ENCODE measurements at regions of chr20 and their contacts with region 1.

Region 1: DNA sequence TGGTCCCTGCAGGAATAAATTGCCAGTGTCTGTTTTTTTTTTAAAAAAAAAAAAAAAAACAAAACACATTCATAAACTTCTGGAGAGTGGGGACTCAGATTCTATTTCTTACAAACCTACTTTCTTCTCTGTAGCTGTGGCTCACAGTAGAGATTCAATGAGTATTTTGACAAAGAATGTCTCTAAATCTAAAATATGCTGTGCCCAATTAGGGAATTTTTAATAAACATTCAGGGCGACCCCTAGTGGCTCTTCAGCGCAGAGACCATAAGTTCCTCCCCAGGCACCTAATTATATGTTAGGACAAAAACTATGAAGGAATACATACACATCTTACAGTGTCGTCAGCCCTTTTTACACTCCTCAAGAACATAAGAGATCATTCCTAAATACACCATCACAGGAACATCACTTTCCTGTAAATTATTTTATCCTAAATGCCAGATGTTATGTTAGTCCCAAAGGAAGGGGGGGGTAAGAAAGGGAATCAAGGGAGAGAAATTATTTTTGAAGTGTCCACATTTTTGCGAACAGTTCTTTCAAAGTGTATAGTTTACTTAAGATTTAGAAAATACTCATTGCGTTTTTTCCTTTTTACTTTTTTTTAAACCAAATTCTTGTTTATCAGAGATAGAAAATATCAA is 21.8 kb upstream of the NAA20 start:
- DNase-seq: peak; percentile 63
- ATAC-seq: peak; percentile 55; the same call in 2 of the 3 replicates
- H3K4me3 ChIP-seq: no peak overlapping the region
- H3K27ac ChIP-seq: no peak overlapping the region
- H3K4me1 ChIP-seq: peaks cover 38% of the 10 kb centered on the region
- H3K27me3 ChIP-seq: no peaks in the 10 kb centered on the region
- CTCF ChIP-seq: peak; percentile 85
- EP300 ChIP-seq: no peak
- POLR2A ChIP-seq: no peak
- RAD21 ChIP-seq: peak; percentile 78

Region 2: GRCh38 chr20:19784511-19785172 is 210.7 kb before region 1 on chr20:
- CTCF ChIA-PET with region 1: interaction called, 23 read pairs
- POLR2A ChIA-PET with region 1: no interaction called
- in situ Hi-C with region 1: loop called (anchors 5 kb)
- intact Hi-C with region 1: loop called (anchors 1 kb)
- DNase-seq: peak; percentile 75
- ATAC-seq: peak; percentile 91
- H3K4me3 ChIP-seq: 0 out of 6 replicates have a peak overlapping the region, but pooled peaks of 1 of the 3 experiments have one; percentile 2
- H3K27ac ChIP-seq: no peak overlapping the region
- H3K4me1 ChIP-seq: peaks cover 14% of the 10 kb centered on the region
- H3K27me3 ChIP-seq: no peaks in the 10 kb centered on the region
- CTCF ChIP-seq: peak; percentile 88
- EP300 ChIP-seq: no peak
- POLR2A ChIP-seq: no peak
- RAD21 ChIP-seq: peak; percentile 72

Region 3: DNA sequence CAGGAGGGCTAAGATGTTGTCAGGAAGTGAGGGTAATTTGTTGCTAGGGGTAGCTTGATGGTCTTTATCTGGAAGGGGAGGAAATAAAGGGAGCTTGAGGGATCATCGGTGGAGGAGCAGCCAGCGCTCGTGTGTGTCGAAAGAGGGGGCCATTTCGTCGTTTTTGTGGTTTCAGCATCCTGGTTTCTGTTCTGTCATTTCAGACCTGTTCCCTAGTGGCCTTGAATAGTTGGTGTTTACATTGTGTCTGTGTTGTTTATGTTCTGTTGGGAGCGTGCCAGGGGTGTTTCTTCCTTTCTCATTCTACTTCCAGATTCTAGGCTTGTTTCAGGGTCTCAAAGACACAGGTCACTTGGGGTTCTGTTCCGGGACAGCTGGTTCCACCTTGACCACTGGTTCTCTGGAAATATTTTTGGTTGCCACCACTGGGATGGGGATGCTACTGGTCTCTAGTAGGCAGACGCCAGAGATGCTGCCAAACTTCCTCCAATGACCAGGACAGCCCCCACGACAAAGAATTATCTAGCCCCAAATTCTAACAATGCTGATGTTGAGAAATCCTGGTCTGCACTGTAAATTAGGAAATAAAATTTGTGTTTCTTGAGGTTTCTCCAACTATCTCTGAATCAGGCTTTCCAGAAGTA is 92.1 kb before region 1 on chr20:
- CTCF ChIA-PET with region 1: interaction called, 22 read pairs
- POLR2A ChIA-PET with region 1: no interaction called
- in situ Hi-C with region 1: loop called (anchors 5 kb)
- intact Hi-C with region 1: loop called (anchors 1 kb)
- DNase-seq: peak; percentile 86
- ATAC-seq: peak; percentile 86
- H3K4me3 ChIP-seq: no peak overlapping the region
- H3K27ac ChIP-seq: no peak overlapping the region
- H3K4me1 ChIP-seq: peaks cover 17% of the 10 kb centered on the region
- H3K27me3 ChIP-seq: no peaks in the 10 kb centered on the region
- CTCF ChIP-seq: peak; percentile 95
- EP300 ChIP-seq: peak in 1 of 2 experiments; percentile 64; a peak in 1 of 4 replicates
- POLR2A ChIP-seq: no peak
- RAD21 ChIP-seq: peak; percentile 80

Region 4: GRCh38 chr20:19915111-19915798 is 80.1 kb before region 1 on chr20:
- CTCF ChIA-PET with region 1: no interaction called
- POLR2A ChIA-PET with region 1: no interaction called
- in situ Hi-C with region 1: no loop called
- intact Hi-C with region 1: loop called (anchors 5 kb)
- DNase-seq: no peak
- ATAC-seq: no peak
- H3K4me3 ChIP-seq: no peak overlapping the region
- H3K27ac ChIP-seq: no peak overlapping the region
- H3K4me1 ChIP-seq: peaks cover 35% of the 10 kb centered on the region
- H3K27me3 ChIP-seq: peaks cover 0 to 16% of the 10 kb centered on the region in 2 experiments; a peak in 4 of 5 replicates
- CTCF ChIP-seq: no peak
- EP300 ChIP-seq: no peak
- POLR2A ChIP-seq: no peak
- RAD21 ChIP-seq: no peak

Region 5: DNA sequence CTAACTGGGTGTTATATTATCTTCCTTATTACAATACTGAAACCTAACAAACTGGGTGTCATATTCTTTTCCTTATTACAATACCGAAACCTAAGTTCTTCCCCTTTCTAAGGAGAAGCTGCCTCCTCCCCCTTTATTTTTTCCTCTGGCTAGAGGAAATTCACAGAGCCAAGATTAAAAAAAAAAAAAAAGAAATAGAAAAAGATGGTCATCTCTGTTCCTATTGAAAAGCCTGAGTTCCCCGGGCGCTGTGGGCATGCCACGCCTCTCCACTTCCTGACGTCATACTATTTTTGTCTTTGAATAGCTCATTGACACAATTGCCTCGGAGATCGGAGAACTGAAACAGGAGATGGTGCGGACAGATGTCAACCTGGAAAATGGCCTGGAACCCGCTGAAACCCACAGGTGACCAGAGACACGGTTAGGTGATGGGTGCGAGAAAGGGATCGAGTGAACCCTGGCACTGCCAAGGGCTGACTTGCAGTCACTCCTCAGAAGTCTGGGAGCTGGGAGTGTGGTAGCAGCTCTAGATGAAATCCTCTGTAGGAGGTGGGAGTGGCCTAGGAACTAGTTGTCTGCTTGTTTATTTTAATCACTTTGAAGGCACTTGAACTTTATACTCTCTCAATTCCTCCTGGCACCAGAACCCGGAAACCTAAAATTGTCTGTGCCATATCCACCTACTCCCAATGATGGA is 60.4 kb before region 1 on chr20:
- CTCF ChIA-PET with region 1: no interaction called
- POLR2A ChIA-PET with region 1: no interaction called
- in situ Hi-C with region 1: no loop called
- intact Hi-C with region 1: no loop called
- DNase-seq: no peak
- ATAC-seq: no peak
- H3K4me3 ChIP-seq: no peak overlapping the region
- H3K27ac ChIP-seq: no peak overlapping the region
- H3K4me1 ChIP-seq: peaks cover 27% of the 10 kb centered on the region
- H3K27me3 ChIP-seq: no peaks in the 10 kb centered on the region
- CTCF ChIP-seq: no peak
- EP300 ChIP-seq: no peak
- POLR2A ChIP-seq: no peak
- RAD21 ChIP-seq: no peak

Measured in HepG2 (cell line).